Activated CD4-positive, alpha-beta T cell treated with anti-CD3 and anti-CD28 coated beads, Interleukin-2, amount 10 ng/mL, durations not matched to agents 24 days and 14 days (primary cell): ENCODE measurements at regions of chr12 and their contacts with region 1.

Region 1: GRCh38 chr12:47216150-47216677 is 136.5 kb upstream of the AMIGO2 start:
- DNase-seq: peak; percentile 93
- H3K4me3 Mint-ChIP-seq: peak overlapping the region; percentile 96
- H3K27ac Mint-ChIP-seq: peak overlapping the region; percentile 98
- H3K4me1 Mint-ChIP-seq: peaks cover 49% of the 10 kb centered on the region
- H3K27me3 Mint-ChIP-seq: no peaks in the 10 kb centered on the region

Region 2: DNA sequence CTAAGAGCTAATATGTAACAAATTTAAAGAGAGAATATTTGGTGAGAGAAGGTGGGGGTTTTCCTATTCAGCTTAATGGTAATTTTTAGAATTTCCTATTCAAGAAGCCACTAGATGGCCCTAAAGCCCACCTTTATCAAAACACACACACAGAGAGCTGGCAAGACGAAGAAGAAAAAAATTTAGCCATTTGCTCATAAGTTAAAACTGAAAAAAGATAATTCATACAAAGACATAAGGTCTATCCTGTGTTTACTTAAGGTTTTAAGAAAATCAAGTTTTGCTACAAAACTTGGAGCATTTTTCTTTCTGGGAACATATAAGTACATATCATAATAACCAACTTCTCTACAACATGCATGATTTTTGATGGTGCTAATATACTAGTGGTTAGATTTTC is 183.6 kb before region 1 on chr12:
- intact Hi-C with region 1: loop called (anchors 1 kb)
- DNase-seq: peak; percentile 72
- H3K4me3 Mint-ChIP-seq: no peak overlapping the region
- H3K27ac Mint-ChIP-seq: no peak overlapping the region
- H3K4me1 Mint-ChIP-seq: peaks cover 13% of the 10 kb centered on the region
- H3K27me3 Mint-ChIP-seq: peaks cover 2% of the 10 kb centered on the region

Region 3: GRCh38 chr12:47147739-47148138 is 68.5 kb before region 1 on chr12:
- intact Hi-C with region 1: no loop called
- DNase-seq: no peak
- H3K4me3 Mint-ChIP-seq: no peak overlapping the region
- H3K27ac Mint-ChIP-seq: no peak overlapping the region
- H3K4me1 Mint-ChIP-seq: peaks cover 17% of the 10 kb centered on the region
- H3K27me3 Mint-ChIP-seq: no peaks in the 10 kb centered on the region

Region 4: GRCh38 chr12:47184229-47184628 is 32.0 kb before region 1 on chr12:
- intact Hi-C with region 1: no loop called
- DNase-seq: peak; percentile 48
- H3K4me3 Mint-ChIP-seq: no peak overlapping the region
- H3K27ac Mint-ChIP-seq: peak overlapping the region; percentile 38
- H3K4me1 Mint-ChIP-seq: peaks cover 21% of the 10 kb centered on the region
- H3K27me3 Mint-ChIP-seq: no peaks in the 10 kb centered on the region

Region 5: GRCh38 chr12:47276621-47277309 is 60.6 kb after region 1 on chr12:
- intact Hi-C with region 1: loop called (anchors 2 kb)
- DNase-seq: peak; percentile 90
- H3K4me3 Mint-ChIP-seq: peak overlapping the region; percentile 57
- H3K27ac Mint-ChIP-seq: peak overlapping the region; percentile 89
- H3K4me1 Mint-ChIP-seq: peaks cover 59% of the 10 kb centered on the region
- H3K27me3 Mint-ChIP-seq: no peaks in the 10 kb centered on the region

Region 6: DNA sequence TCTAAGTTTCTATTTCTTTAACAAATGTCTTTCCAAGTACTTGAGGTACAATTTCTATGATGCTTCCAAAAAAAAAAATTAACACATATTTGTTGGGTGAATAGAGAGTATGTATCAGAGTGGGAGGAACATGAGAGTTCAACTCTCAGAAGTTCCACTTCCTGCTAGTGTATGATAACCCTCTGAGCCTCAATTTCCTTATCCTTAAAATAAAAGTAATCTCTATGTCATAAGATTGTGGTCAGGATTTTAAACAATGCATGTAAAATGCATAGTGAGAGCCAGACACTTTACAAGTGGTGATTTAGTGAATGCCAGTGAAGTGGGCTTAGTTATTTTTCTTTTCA is 133.8 kb after region 1 on chr12:
- intact Hi-C with region 1: no loop called
- DNase-seq: no peak
- H3K4me3 Mint-ChIP-seq: peak overlapping the region; percentile 78
- H3K27ac Mint-ChIP-seq: peak overlapping the region; percentile 99
- H3K4me1 Mint-ChIP-seq: peaks cover 58% of the 10 kb centered on the region
- H3K27me3 Mint-ChIP-seq: no peaks in the 10 kb centered on the region

Region 7: GRCh38 chr12:47361389-47362021 is 145.3 kb after region 1 on chr12:
- intact Hi-C with region 1: loop called (anchors 1 kb)
- DNase-seq: peak; percentile 88
- H3K4me3 Mint-ChIP-seq: peak overlapping the region; percentile 81
- H3K27ac Mint-ChIP-seq: peak overlapping the region; percentile 98
- H3K4me1 Mint-ChIP-seq: peaks cover 53% of the 10 kb centered on the region
- H3K27me3 Mint-ChIP-seq: no peaks in the 10 kb centered on the region

Region 8: DNA sequence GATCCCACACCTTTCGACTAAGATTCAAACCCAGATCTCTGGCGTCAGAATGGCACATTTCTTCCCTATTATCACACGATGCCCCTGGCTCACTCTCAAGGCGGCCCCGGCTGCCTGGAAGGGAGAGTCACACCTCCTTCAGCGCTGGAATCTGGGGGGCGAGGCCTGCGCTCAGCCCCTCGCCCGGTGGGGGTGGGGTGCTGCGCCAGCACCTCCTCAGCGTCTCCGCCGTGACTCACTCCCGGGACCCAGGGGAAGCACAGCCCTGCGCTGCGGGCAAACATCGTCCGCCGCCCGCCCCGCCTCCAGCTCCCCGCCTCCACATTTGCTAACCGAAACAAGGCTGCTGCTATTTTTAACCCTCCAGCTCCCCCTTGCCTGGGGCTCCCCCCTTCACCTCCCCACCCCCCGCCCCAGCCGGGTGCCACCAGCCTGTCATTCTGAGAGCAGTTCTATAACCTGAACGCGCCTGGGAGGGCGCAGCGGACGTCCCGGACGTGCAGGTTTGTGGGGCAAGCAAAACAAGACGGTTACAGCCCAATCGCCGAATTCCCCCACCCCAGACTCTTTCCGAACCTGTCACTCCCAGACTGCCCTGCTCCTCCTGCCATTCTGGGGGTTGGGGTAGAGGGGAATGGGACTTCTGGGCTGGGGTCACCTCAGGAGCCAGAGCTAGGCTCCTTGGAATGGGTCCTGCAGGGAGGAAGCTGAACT is 596.7 kb after region 1 on chr12:
- intact Hi-C with region 1: loop called (anchors 5 kb)
- DNase-seq: peak; percentile 97
- H3K4me3 Mint-ChIP-seq: peak overlapping the region; percentile 88
- H3K27ac Mint-ChIP-seq: peak overlapping the region; percentile 99
- H3K4me1 Mint-ChIP-seq: peaks cover 81% of the 10 kb centered on the region
- H3K27me3 Mint-ChIP-seq: no peaks in the 10 kb centered on the region